Activated T-helper 2 cell treated with anti-CD3 and anti-CD28 coated beads, Interferon-gamma antibody, Interleukin-2, Interleukin-4, amounts not matched to agents 10 μg/mL and 5 μg/mL and 100 μg/mL, durations not matched to agents 14 hours and 24 hours and 36 hours (primary cell): ENCODE measurements at regions of chr18 and their contacts with region 1.

Region 1: GRCh38 chr18:3062798-3063680 is 50.1 kb upstream of the LPIN2 start:
- DNase-seq: peak; percentile 62
- H3K4me3 Mint-ChIP-seq: peak overlapping the region; percentile 67
- H3K27ac Mint-ChIP-seq: peak overlapping the region; percentile 87
- H3K4me1 Mint-ChIP-seq: peaks cover 63% of the 10 kb centered on the region
- H3K27me3 Mint-ChIP-seq: no peaks in the 10 kb centered on the region

Region 2: GRCh38 chr18:2629004-2629403 is 434.0 kb before region 1 on chr18:
- intact Hi-C with region 1: no loop called
- DNase-seq: no peak
- H3K4me3 Mint-ChIP-seq: no peak overlapping the region
- H3K27ac Mint-ChIP-seq: no peak overlapping the region
- H3K4me1 Mint-ChIP-seq: peaks cover 21% of the 10 kb centered on the region
- H3K27me3 Mint-ChIP-seq: no peaks in the 10 kb centered on the region

Region 3: GRCh38 chr18:2641638-2642037 is 421.4 kb before region 1 on chr18:
- intact Hi-C with region 1: loop called (anchors 5 kb)
- DNase-seq: no peak
- H3K4me3 Mint-ChIP-seq: peak overlapping the region; percentile 50
- H3K27ac Mint-ChIP-seq: peak overlapping the region; percentile 64
- H3K4me1 Mint-ChIP-seq: peaks cover 43% of the 10 kb centered on the region
- H3K27me3 Mint-ChIP-seq: no peaks in the 10 kb centered on the region

Region 4: GRCh38 chr18:2716394-2717326 is 346.4 kb before region 1 on chr18:
- intact Hi-C with region 1: no loop called
- DNase-seq: no peak
- H3K4me3 Mint-ChIP-seq: no peak overlapping the region
- H3K27ac Mint-ChIP-seq: peak overlapping the region; percentile 58
- H3K4me1 Mint-ChIP-seq: peaks cover 34% of the 10 kb centered on the region
- H3K27me3 Mint-ChIP-seq: no peaks in the 10 kb centered on the region

Region 5: GRCh38 chr18:2958819-2959298 is 104.2 kb before region 1 on chr18:
- intact Hi-C with region 1: loop called (anchors 1 kb)
- DNase-seq: no peak
- H3K4me3 Mint-ChIP-seq: peak overlapping the region; percentile 40
- H3K27ac Mint-ChIP-seq: peak overlapping the region; percentile 99
- H3K4me1 Mint-ChIP-seq: peaks cover 84% of the 10 kb centered on the region
- H3K27me3 Mint-ChIP-seq: no peaks in the 10 kb centered on the region

Region 6: DNA sequence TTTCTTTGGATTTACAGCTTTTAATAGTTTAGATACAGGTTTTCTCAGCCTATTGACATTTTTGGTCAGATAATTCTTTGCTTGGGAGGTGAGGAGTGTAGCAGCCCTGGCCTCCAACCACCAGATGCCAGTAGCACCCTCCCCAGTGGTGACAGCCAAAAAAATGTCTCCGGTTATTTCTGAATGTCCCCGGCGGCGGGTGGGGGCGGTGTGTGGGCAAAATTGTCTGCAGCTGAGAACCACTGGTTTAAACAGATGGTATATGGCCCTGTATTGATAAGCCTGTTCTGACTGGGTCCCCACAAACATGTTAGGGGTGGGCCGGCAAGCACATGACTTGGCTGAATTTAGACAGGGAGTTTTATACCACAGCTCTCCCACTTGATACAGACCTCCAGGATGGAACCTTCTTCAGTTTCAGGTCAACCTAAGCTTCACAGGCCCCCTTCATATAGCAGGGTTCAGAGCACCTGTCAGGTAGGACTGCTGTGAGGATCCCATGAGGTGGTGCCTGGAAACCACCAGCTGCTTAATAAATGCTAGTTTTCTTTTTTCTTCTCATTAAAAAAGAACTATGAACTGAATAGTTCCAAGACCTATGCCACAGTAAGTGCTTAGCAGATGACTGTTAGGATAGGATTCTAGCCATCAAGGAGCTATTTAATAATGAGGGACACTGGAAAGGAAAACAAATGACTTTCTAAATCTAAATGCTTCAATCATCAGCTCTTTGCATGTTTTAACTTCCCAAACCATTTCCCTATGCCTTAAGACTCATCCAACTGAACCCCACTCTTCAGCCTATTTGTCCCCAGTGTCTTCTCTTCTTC is 68.2 kb before region 1 on chr18:
- intact Hi-C with region 1: loop called (anchors 1 kb)
- DNase-seq: peak; percentile 69
- H3K4me3 Mint-ChIP-seq: peak overlapping the region; percentile 43
- H3K27ac Mint-ChIP-seq: peak overlapping the region; percentile 89
- H3K4me1 Mint-ChIP-seq: peaks cover 73% of the 10 kb centered on the region
- H3K27me3 Mint-ChIP-seq: no peaks in the 10 kb centered on the region

Region 7: DNA sequence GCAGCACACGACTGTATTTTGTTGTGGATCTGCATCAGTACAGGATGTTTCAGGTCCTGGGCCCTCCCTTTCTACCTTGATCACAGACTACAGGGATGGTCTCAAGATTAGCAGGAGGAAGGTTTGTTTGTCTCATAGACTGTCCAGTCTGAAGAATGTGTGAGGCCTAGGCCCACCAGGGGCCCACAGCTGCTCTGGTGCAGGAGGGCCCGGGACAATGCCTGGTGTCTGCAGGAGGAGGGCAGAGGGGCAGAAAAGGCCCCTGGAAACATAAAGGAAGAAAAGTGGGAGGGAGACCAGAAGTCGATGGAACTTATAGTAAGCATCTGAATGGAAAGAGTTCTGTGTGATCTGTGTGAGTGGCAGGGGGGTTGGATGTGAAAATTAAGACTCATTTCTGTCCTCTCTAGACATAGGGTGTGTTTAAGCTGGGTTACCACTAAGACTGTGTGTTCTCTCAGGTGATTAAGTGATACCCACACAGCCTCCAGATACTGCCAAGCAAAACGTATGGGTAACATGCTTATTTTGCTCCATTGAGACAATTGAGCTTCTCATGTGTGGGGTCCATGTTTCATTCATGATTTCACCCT is 16.7 kb before region 1 on chr18:
- intact Hi-C with region 1: loop called (anchors 1 kb)
- DNase-seq: no peak
- H3K4me3 Mint-ChIP-seq: no peak overlapping the region
- H3K27ac Mint-ChIP-seq: peak overlapping the region; percentile 50
- H3K4me1 Mint-ChIP-seq: peaks cover 23% of the 10 kb centered on the region
- H3K27me3 Mint-ChIP-seq: no peaks in the 10 kb centered on the region